Right cardiac atrium (tissue), 5 donors: ENCODE measurements at regions of chr4 and their contacts with region 1.

Region 1: DNA sequence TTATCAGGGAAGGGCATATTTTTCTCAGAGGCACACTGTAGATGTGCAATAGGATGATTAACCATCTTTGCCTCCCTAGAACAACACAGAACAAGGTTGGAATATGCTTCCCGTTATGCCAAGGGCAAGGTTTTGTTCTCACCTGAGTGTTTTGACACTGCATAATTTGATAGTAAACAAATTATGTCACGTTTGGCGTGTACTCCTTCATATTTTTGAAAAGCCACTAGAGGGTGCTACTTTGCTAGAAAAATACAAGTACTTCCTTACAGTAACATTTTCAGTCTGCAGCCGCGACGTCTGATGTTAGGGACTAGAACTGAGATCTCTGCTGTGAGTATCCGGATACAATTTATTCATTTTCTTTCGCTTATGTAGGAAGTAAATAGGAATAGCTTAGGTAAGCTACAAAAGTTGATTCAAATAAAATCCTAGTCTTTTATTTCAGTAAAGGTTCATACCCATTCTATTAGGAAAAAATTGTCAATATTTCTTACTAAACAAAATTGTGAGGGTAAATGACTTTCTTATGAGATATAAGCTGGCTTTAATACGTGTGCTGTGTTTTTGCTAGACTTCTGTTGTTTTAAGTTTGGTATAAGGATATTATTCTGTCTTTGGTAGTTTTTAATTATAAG is 181.1 kb upstream of the WDFY3 start:
- DNase-seq: peak; percentile 45 to 81 (median 55)
- ATAC-seq: peak; percentile 77 to 78
- H3K4me3 ChIP-seq: no peak overlapping the region
- H3K27ac ChIP-seq: no peak overlapping the region
- H3K4me1 ChIP-seq: no peaks in the 10 kb centered on the region
- H3K27me3 ChIP-seq: no peaks in the 10 kb centered on the region

Region 2: GRCh38 chr4:85302756-85303155 is 155.2 kb after region 1 on chr4:
- intact Hi-C with region 1: no loop called
- DNase-seq: no peak
- ATAC-seq: no peak
- H3K4me3 ChIP-seq: no peak overlapping the region
- H3K27ac ChIP-seq: no peak overlapping the region
- H3K4me1 ChIP-seq: no peaks in the 10 kb centered on the region
- H3K27me3 ChIP-seq: no peaks in the 10 kb centered on the region

Region 3: GRCh38 chr4:85370430-85371032 is 223.0 kb after region 1 on chr4:
- intact Hi-C with region 1: loop called in 1 of 4 experiments (anchors 10 kb)
- DNase-seq: peak in 2 of 3 donors; percentile 8 to 37
- ATAC-seq: peak; percentile 51 to 54
- H3K4me3 ChIP-seq: no peak overlapping the region
- H3K27ac ChIP-seq: no peak overlapping the region
- H3K4me1 ChIP-seq: no peaks in the 10 kb centered on the region
- H3K27me3 ChIP-seq: no peaks in the 10 kb centered on the region

Region 4: DNA sequence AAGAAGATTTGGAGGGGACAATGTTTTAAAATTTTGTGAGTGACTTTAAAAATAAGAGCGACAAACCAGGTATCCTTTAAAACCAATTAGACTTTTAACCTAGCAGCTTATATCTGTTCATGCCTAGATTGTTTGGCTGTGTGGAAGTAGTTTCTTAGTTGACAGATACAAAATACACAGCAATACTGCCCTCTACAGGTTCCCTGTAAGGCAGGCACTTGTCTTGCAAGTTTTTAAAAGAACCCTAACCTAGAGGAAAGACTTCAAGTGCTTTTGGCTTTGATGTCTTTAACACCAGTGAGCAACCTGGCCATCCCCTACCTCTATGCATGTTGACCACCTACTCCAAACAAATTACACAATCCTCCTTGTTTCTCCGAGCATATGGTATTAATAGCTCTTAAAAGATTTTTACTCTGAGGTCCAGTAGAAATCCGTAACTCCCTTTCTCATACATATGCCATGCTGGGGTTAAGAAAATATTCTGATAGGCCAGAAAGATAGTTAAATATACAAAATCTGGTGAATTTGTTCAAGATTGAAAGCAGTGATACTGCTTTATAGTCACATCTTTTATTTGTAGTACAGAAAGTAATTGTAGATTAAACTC is 600.4 kb after region 1 on chr4:
- intact Hi-C with region 1: loop called (anchors 2 to 10 kb)
- DNase-seq: no peak
- ATAC-seq: peak; percentile 77 to 78
- H3K4me3 ChIP-seq: no peak overlapping the region
- H3K27ac ChIP-seq: no peak overlapping the region
- H3K4me1 ChIP-seq: peaks cover 5% of the 10 kb centered on the region
- H3K27me3 ChIP-seq: no peaks in the 10 kb centered on the region

Region 5: DNA sequence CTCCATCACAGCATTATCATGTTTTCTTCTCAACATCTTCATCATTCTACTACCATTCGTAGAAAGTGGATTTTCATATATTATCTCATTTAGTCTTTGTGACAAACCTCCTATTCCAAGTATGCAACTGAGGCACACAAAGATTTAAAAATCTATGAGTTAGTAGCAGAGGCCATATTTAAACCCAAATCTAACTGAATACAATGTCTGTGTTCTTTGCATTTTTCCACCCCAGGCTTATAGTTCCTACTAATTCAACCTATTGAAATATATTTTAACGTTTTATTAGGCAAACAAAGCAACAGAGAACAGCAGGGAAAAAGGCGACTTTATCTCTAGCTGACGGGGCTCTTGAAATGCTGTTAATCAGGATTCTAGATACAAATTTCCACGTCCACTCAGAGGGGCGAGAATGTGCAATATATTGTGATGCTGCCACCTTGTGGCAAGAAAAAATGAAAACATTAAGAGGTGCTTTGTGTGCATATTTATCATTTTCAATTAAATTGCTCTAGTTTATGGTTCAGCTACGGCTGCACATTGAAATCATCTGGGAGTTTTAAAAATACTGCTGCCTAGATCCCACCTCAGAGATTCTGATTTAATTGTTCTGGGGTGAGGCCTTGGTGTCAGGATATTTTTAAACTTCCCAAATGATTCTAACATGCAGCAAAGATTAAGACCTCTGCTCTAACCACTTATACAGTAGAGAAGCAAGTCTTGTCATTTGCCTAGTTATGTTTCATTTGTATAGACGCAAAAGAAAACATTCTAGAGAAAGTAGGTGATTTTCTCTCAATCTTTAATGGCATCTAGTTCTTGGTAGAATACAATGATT is 896.4 kb after region 1 on chr4:
- intact Hi-C with region 1: loop called in 1 of 4 experiments (anchors 10 kb)
- DNase-seq: no peak
- ATAC-seq: peak; percentile 62 to 76
- H3K4me3 ChIP-seq: no peak overlapping the region
- H3K27ac ChIP-seq: no peak overlapping the region
- H3K4me1 ChIP-seq: no peaks in the 10 kb centered on the region
- H3K27me3 ChIP-seq: no peaks in the 10 kb centered on the region